ENCODE measurements at regions of chr4 and their contacts with region 1.

Region 1: GRCh38 chr4:124478470-124478869 is 234.1 kb downstream of the ANKRD50 start:
- DNase-seq: no peak
- ATAC-seq: no peak
- H3K4me3 ChIP-seq: no peak overlapping the region
- H3K4me3 Mint-ChIP-seq: no peak overlapping the region
- H3K27ac ChIP-seq: no peak overlapping the region
- H3K27ac Mint-ChIP-seq: no peak overlapping the region
- H3K4me1 ChIP-seq: no peaks in the 10 kb centered on the region
- H3K4me1 Mint-ChIP-seq: no peaks in the 10 kb centered on the region
- H3K27me3 ChIP-seq: no peaks in the 10 kb centered on the region
- H3K27me3 Mint-ChIP-seq: no peaks in the 10 kb centered on the region

Region 2: DNA sequence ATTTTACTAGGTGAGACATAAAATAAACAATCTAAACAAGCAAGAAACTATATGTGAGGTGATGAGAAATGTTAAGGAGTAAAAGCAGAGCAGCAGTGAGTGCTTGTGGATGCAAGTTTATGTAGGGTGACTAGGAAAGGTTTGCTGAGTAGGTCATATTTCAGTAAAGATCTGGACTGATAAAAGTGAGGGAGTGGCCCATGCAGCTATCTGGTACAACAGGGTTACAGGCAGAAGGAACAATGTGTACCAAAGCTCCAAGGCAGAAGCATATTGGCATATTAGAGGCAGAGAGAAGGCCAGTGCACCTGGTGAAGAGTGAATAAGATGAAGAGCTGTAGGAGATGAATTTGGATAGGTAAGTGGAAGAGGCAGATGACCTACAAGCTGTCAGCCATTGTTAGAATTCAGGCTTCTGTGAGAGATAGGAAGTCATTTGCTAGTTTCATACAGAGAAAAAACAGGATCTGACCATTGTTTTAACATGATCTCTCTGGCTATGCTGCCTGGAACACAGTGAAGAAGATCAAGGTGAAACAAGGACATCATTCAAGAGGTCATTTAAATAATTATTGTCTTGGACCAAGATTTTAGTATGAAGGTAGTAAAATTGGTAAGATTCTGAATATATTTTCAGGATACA is 40.5 kb before region 1 on chr4:
- CTCF ChIA-PET with region 1: no interaction called
- POLR2A ChIA-PET with region 1: no interaction called
- intact Hi-C with region 1: loop called in 1 of 2 experiments (anchors 1 kb)
- DNase-seq: no peak
- ATAC-seq: no peak
- H3K4me3 ChIP-seq: no peak overlapping the region
- H3K4me3 Mint-ChIP-seq: no peak overlapping the region
- H3K27ac ChIP-seq: no peak overlapping the region
- H3K27ac Mint-ChIP-seq: no peak overlapping the region
- H3K4me1 ChIP-seq: no peaks in the 10 kb centered on the region
- H3K4me1 Mint-ChIP-seq: no peaks in the 10 kb centered on the region
- H3K27me3 ChIP-seq: no peaks in the 10 kb centered on the region
- H3K27me3 Mint-ChIP-seq: no peaks in the 10 kb centered on the region

Region 3: DNA sequence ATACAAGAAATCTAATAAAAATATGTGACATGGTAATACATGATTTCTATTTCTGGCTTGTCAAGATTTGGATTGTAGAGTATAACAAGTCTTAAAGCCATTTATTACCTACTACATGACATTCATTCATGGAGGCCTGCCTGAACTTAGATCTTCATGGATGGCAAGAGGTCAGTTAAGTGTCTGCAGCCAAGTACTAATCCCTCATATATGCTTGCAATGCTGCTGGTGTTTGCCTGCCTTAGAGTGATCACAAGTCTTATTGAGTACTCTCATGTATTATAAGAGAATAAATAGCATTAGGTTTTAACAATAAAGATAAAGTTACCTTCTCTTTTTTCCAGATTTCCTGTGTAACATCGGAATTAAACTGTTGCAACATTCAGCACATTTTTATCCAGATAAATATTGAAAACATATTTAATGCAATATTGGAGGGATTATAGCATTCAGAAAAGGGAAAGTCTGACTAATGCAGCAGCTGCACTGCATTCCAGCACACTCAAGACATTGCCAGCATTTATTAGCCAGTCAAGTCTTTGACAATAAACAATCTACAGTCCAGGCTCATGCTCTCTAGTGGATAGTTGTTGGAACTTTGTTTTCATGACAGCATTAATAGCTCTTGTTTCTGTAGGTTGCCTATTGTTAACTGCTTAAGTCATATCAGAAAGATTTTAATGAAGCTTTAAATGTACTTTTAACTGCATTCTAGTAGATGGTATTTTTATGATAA is 1573.4 kb after region 1 on chr4:
- CTCF ChIA-PET with region 1: no interaction called
- POLR2A ChIA-PET with region 1: no interaction called
- intact Hi-C with region 1: no loop called
- DNase-seq: no peak
- ATAC-seq: no peak
- H3K4me3 ChIP-seq: no peak overlapping the region
- H3K4me3 Mint-ChIP-seq: no peak overlapping the region
- H3K27ac ChIP-seq: no peak overlapping the region
- H3K27ac Mint-ChIP-seq: no peak overlapping the region
- H3K4me1 ChIP-seq: no peaks in the 10 kb centered on the region
- H3K4me1 Mint-ChIP-seq: no peaks in the 10 kb centered on the region
- H3K27me3 ChIP-seq: no peaks in the 10 kb centered on the region
- H3K27me3 Mint-ChIP-seq: no peaks in the 10 kb centered on the region

Measured in naive thymus-derived CD4-positive, alpha-beta T cell (primary cell).